Breast epithelium (tissue), 4 donors: ENCODE measurements at regions of chr3 and their contacts with region 1.

Region 1: DNA sequence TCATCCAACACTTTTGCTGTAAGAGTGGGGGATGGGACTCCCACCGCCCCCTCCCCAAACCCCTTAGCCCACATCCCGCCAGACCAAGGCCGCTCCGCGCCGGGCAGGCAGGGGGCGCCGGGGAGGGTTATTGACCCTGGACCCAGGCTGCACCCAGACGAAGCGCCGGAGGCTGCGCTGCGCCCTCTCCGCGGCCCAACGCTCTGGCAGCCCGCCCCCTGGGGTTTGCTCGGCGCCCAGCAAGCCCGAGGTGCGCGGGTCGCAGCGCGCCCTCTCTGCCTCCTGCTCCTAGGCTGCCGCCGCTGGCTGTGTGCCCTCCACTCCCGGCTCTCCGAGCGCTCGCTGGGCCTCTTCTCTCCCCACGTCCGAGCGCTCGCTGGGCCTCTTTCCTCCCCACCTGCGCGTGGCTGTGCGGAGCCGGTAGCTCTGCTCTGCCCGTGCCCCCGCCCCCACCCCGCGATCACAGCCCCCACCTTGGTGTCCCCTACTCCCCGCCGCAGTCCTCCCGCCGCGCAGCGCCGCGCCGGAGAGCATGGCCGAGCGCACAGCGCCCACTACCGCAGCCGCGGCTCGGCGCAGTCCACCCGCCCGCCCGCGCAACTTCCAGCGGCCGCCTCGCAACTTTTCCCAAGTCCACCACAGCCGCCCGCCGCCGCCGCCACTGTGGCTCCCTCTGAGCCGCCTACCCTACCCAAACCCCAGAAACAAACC is 1.2 kb downstream of the MECOM start:
- DNase-seq: no peak
- H3K4me3 ChIP-seq: peak overlapping the region; percentile 51 to 66 (median 55)
- H3K27ac ChIP-seq: peak overlapping the region; percentile 33 to 68
- H3K4me1 ChIP-seq: peaks cover 0 to 4% of the 10 kb centered on the region in 2 donors
- H3K27me3 ChIP-seq: peaks cover 0 to 100% of the 10 kb centered on the region in 2 donors
- CTCF ChIP-seq: peak in 1 of 3 donors; percentile 8
- POLR2A ChIP-seq: no peak

Region 2: GRCh38 chr3:169149349-169149890 is 512.9 kb before region 1 on chr3:
- intact Hi-C with region 1: loop called (anchors 5 kb)
- DNase-seq: peak; percentile 57 to 78
- H3K4me3 ChIP-seq: peak overlapping the region in 2 of 3 donors; percentile 19 to 59
- H3K27ac ChIP-seq: peak overlapping the region in 1 of 2 donors; percentile 23
- H3K4me1 ChIP-seq: no peaks in the 10 kb centered on the region
- H3K27me3 ChIP-seq: peaks cover 0 to 45% of the 10 kb centered on the region in 2 donors
- CTCF ChIP-seq: peak; percentile 62 to 91 (median 88)
- POLR2A ChIP-seq: no peak